ENCODE measurements at regions of chr12 and their contacts with region 1.

Region 1: DNA sequence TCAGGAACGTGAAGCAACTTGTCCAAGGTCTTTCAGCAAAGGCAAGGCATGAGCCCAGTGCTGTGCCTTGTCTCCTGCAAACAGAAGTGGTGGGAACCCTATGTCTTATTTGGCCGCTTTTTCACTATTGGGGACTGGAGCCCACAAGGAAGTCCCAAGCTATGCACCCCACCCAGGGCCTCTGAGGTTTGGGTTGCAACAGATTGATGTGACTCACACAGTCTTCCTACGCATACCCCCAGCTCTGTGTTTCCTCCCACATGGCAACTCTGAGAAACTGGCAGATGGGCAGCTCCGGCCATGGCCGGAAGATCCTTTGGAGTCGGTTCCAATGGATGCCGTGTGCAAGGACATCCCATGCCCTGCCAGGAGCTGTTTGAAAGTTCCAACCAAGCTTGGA is 28.3 kb upstream of the CMKLR1 start:
- DNase-seq: no peak
- ATAC-seq: no peak
- H3K4me3 ChIP-seq: no peak overlapping the region
- H3K27ac ChIP-seq: no peak overlapping the region
- H3K4me1 ChIP-seq: no peaks in the 10 kb centered on the region
- H3K27me3 ChIP-seq: no peaks in the 10 kb centered on the region
- CTCF ChIP-seq: no peak

Region 2: DNA sequence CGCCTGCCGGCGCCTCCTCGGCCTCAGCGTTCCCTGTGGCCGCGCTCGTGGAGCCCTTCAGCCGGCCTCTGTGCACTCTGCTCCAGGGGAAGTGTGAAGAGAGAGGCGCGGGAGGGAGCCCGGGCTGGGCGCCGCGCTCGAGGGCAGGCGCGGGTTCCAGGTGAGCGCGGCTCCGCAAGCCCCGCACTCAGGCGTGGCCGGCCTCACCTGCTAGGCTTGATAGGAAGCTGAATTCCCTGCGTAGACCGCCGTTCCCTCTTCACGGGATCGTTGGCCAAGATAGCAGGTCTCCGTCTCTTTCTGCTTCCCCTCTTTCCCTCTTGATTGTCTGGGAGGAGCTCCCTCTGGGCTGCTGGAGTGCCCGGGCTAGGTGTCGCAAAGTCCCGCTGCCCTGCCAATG is 503.2 kb before region 1 on chr12:
- CTCF ChIA-PET with region 1: no interaction called
- POLR2A ChIA-PET with region 1: no interaction called
- in situ Hi-C with region 1: no loop called
- intact Hi-C with region 1: no loop called
- DNase-seq: no peak
- ATAC-seq: no peak
- H3K4me3 ChIP-seq: no peak overlapping the region
- H3K27ac ChIP-seq: no peak overlapping the region
- H3K4me1 ChIP-seq: no peaks in the 10 kb centered on the region
- H3K27me3 ChIP-seq: peaks cover 6% of the 10 kb centered on the region; the same call in 1 of the 2 replicates
- CTCF ChIP-seq: no peak

Region 3: DNA sequence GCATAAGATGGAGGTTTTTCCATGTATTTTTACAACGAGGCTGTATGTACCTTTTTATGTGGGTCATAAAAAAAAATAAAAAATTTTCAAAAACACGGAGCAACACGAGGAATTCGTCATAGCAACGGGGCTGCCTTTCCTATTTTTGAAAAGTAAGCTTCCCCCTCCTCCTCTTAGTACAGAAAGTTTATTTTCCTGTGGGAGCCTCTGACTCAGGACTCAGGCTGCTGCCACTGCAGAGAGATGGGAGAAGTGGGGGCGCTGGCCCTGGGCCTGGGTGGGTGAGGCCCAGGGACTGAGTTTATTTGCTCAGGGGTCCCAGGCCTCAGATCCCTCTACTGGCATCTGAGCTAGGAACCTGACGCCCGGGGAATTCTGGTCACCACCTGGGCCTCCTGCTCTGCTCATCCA is 18.2 kb before region 1 on chr12:
- CTCF ChIA-PET with region 1: interaction called, 10 read pairs
- POLR2A ChIA-PET with region 1: no interaction called
- in situ Hi-C with region 1: no loop called
- intact Hi-C with region 1: no loop called
- DNase-seq: no peak
- ATAC-seq: peak; percentile 28; the same call in 1 of the 2 replicates
- H3K4me3 ChIP-seq: no peak overlapping the region
- H3K27ac ChIP-seq: no peak overlapping the region
- H3K4me1 ChIP-seq: no peaks in the 10 kb centered on the region; the same call in 1 of the 2 replicates
- H3K27me3 ChIP-seq: no peaks in the 10 kb centered on the region
- CTCF ChIP-seq: no peak